G401 (cell line): ENCODE measurements at regions of chr12 and their contacts with region 1.

Region 1: GRCh38 chr12:51752234-51752889 is 96.2 kb downstream of the FIGNL2 start:
- DNase-seq: peak; percentile 85

Region 2: DNA sequence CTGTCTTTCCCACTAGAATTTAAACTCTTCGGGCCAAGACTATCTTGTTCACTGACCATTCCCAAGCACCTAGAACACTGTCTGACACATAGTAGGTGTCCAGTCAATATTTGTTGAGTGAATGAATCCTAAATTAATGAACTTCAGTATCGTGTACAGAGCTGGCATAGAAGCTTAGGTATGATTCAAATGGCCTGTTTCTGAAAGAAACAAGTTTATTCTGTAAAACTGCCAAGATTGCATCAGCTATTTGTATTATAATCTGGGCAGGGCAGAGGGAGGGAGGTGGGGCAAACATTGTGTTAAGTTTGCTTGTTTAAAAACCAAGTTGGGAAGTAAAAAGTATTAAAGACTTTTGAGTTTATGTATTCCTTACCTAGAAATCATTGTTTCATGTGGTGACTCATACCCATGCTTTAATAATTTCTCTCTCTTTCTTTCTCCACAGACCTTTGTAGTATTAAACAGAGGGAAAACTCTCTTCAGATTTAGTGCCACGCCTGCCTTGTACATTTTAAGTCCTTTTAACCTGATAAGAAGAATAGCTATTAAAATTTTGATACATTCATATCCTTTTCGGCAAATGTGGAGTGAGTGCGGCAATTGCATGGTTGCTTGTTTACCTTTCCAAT is 68.5 kb before region 1 on chr12:
- in situ Hi-C with region 1: loop called (anchors 10 kb)
- DNase-seq: no peak